ENCODE measurements at regions of chr7 and their contacts with region 1.

Region 1: DNA sequence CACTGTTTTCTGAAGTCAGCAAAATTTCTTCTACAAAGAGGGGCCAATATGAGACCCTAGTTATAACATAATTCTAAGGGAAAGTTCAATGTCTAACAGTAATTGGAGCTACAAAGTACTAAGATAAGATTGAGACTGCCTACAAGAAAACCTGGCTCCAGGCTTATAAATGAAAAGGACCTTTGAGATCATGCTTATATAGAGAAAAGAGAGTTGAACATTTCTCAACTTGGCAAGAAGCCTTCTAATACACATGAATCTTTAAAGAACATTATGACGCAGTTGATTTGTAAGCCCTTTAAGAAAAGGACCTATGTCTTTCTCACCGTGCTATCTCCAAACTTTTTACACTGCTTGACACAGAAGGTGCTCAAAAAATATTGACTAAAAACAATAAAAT is 87.9 kb downstream of the TPK1 start:
- DNase-seq: peak; percentile 39

Region 2: DNA sequence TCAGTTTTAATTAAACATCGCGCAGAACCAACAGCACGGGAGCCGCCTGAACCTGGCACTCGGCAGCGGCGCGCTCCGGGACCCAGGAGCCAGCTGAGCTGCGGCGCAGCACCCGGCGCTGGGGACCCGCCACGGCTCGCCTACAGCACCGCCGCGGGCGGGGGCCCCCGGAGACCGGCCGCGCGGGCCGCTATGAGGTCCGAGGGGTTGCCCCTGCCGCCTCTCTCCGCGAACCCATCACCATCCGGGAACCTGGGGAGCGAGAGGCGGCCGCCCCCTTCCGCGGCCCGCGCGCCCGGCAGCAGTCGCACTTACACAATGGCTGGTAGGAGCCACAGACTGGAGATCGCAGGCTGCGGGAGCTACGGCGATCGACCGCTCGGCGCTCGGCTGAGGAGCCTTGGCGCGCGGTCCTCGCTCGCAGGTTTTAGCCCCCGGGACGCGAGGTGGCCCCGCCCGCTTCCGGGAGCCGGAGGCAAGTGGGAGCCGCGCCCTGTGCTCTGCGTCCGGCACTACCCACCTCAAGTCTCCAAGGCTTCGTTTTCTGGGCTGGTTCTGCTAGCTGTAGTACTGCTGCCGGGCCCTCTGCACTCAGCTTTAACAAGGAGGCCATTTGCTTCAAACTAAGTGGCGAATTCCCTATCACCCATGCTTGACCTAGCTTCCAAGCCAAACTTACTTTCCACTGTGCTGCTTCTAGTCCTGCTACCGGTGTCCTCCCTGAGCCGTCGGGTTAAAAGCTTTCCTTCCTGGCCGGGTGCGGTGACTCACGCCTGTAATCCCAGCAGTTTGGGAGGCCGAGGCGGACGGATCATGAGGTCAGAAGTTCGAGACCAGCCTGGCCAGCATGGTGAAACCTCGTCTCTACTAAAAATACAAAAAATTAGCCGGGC is 88.0 kb after region 1 on chr7 and contains the start of gene TPK1:
- in situ Hi-C with region 1: loop called (anchors 10 kb)
- DNase-seq: peak; percentile 92
- total RNA-seq, gene TPK1: 2.1 and 3.4 TPM in 2 replicates

Region 3: DNA sequence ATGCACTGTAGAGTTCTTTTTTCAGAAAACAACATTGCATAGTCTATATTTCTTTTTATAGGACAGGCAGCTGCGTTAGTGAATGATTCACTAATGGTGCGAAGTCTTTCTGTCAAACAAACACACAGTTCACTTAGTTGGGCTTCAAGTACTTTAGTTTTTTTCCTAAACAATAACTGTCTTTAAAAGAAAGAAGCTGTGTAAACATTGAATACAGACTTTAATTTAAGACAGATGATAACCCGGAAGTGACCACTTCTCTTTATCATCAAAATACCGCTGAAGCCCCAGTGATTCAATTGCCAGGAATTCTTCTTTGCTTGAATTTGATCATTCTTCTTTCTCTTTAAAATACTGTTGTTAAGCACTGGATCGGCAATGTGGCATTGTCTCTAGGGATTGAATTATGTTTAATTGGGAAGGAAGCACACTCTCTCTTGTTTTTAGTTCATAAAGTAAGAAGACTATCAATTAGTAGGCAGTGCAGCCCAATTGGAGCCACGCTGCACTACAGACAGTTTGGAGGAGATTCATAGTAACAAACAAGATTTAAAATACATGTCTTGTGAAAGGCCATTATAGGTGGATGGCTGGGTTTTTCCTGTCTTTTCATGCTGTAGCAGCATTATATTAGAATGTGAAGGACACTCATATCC is 1399.0 kb after region 1 on chr7:
- in situ Hi-C with region 1: no loop called
- DNase-seq: peak; percentile 13

Measured in SK-MEL-5 (cell line).